Heart right ventricle (tissue), 16 donors: ENCODE measurements at regions of chr12 and their contacts with region 1.

Region 1: GRCh38 chr12:99978152-99978551 is 6.6 kb downstream of the ANKS1B start:
- DNase-seq: no peak
- ATAC-seq: no peak
- H3K4me3 ChIP-seq: no peak overlapping the region
- H3K27ac ChIP-seq: no peak overlapping the region
- H3K4me1 ChIP-seq: no peaks in the 10 kb centered on the region
- H3K27me3 ChIP-seq: peaks cover 0 to 15% (median 0%) of the 10 kb centered on the region in 7 donors
- CTCF ChIP-seq: no peak

Region 2: GRCh38 chr12:99824900-99825542 is 153.1 kb before region 1 on chr12:
- intact Hi-C with region 1: no loop called
- DNase-seq: no peak
- ATAC-seq: no peak
- H3K4me3 ChIP-seq: no peak overlapping the region
- H3K27ac ChIP-seq: no peak overlapping the region
- H3K4me1 ChIP-seq: no peaks in the 10 kb centered on the region
- H3K27me3 ChIP-seq: no peaks in the 10 kb centered on the region
- CTCF ChIP-seq: no peak

Region 3: DNA sequence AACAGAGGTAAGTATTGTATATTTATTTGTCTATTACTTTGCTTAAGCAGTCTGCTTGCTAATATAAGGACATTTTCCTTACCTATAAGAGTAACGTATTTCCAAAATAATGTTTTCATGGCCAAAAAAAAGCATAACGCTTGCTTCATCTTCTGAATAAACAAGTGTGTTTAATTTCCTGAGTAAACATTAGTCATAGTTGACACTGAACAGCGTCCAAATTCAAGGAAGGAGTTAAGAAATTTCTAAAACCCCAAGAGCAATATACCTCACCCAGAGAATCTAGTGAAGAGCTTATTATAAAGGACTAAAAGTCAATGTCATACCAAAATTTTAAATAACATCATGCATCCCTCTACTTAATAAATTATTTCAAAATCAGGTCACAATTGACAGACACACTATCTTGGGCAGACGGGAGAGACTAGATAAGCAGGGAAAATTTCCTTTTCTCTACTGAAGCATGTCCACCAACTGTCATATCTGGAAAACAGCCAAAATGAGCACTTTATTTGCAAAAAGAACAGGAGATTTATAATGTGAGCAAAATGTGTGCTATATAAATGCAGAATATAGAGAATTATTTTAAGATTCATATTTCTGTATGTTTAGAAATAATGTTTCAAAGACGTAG is 18.5 kb before region 1 on chr12:
- intact Hi-C with region 1: loop called in 1 of 10 experiments (anchors 2 kb)
- DNase-seq: no peak
- ATAC-seq: peak in 1 of 8 donors; percentile 63
- H3K4me3 ChIP-seq: no peak overlapping the region
- H3K27ac ChIP-seq: peak overlapping the region in 1 of 10 donors; percentile 4
- H3K4me1 ChIP-seq: peaks cover 0 to 7% (median 0%) of the 10 kb centered on the region in 9 donors
- H3K27me3 ChIP-seq: no peaks in the 10 kb centered on the region
- CTCF ChIP-seq: no peak

Region 4: GRCh38 chr12:100382338-100382737 is 404.2 kb after region 1 on chr12:
- intact Hi-C with region 1: no loop called
- DNase-seq: no peak
- ATAC-seq: no peak
- H3K4me3 ChIP-seq: no peak overlapping the region
- H3K27ac ChIP-seq: no peak overlapping the region
- H3K4me1 ChIP-seq: peaks cover 0 to 8% (median 0%) of the 10 kb centered on the region in 9 donors
- H3K27me3 ChIP-seq: no peaks in the 10 kb centered on the region
- CTCF ChIP-seq: no peak